Activated T-helper 2 cell treated with anti-CD3 and anti-CD28 coated beads, Interferon-gamma antibody, Interleukin-2, Interleukin-4, amounts not matched to agents 10 μg/mL and 5 μg/mL and 100 μg/mL, durations not matched to agents 14 hours and 24 hours and 36 hours (primary cell): ENCODE measurements at regions of chr5 and their contacts with region 1.

Region 1: GRCh38 chr5:37837414-37838032 is 2.3 kb downstream of the GDNF start:
- DNase-seq: peak; percentile 57
- H3K4me3 Mint-ChIP-seq: peak overlapping the region; percentile 49
- H3K27ac Mint-ChIP-seq: no peak overlapping the region
- H3K4me1 Mint-ChIP-seq: peaks cover 22% of the 10 kb centered on the region
- H3K27me3 Mint-ChIP-seq: peaks cover 83% of the 10 kb centered on the region

Region 2: DNA sequence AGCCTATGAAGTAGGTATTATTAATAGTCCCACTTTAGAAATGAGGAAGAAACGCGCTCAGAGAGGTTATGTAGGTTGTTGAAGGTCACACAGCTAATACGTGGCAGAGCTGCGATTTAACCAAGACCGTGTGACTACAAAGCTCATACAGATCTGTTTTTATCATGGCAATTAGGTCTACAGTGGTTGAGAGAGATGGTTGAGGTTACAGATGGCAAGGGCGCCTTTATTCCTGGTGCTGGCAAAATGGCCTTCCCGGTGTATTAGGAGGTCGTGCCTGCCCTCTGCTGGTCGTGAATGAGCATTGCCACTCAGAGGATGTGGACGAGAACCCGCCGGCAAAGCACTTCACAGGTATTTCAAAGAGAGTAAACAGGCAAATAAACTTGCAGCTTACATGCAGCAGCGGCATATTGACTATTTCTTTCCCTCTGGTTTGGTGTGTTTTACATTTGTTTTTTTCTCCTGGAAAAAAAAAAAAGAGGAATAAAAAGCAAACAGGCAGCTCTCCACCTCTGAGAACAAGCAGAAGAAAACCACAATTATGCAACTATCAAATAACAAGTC is 355.6 kb after region 1 on chr5:
- intact Hi-C with region 1: loop called (anchors 1 kb)
- DNase-seq: peak; percentile 37
- H3K4me3 Mint-ChIP-seq: no peak overlapping the region
- H3K27ac Mint-ChIP-seq: no peak overlapping the region
- H3K4me1 Mint-ChIP-seq: no peaks in the 10 kb centered on the region
- H3K27me3 Mint-ChIP-seq: peaks cover 18% of the 10 kb centered on the region

Region 3: DNA sequence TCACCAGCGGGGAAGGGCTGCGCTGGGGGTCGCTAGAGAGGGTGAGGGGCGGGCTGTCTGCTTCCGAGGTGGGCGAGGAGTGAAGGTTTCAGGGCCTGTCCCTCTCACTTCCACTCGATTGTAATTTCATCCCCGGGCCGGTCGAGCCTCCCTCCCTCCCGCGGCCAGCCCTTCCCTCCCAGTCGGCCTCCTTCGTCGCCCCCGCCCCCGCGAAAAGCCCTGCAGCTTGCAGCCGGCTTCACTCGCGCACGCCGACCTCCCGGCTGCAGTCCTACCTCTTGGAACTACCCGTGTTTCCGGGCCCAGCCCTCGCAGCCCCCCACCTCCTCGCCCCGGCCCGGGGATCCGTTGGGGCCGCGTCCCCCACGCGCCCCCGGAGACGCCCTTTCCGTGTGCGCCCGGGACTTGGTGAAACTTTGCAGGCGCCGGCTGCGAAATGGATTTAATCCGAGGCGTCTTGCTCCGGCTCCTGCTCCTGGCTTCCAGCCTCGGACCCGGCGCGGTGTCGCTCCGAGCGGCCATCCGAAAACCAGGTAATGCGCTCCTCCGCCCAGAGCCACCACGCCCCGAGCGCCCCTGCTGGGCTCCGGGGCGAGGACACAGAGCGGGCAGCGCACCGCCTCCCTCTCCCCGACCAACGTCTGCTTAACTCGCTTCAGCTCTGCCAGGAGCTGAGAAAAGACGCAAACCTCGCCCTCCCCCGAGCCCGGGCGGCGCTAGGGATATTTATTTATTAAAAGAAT is 421.0 kb after region 1 on chr5 and contains the start of gene EGFLAM:
- intact Hi-C with region 1: loop called (anchors 2 kb)
- DNase-seq: no peak
- H3K4me3 Mint-ChIP-seq: no peak within 1 kb of the TSS
- H3K27ac Mint-ChIP-seq: no peak within 1 kb of the TSS
- H3K4me1 Mint-ChIP-seq: peaks cover 5% of the 10 kb centered on the region
- H3K27me3 Mint-ChIP-seq: peaks cover 68% of the 10 kb centered on the region
- total RNA-seq, gene EGFLAM: not detected in 2 replicates